ENCODE measurements at regions of chr5 and their contacts with region 1.

Region 1: GRCh38 chr5:77015938-77016569 is 14.2 kb upstream of the AGGF1 start:
- DNase-seq: peak in 1 of 2 donors; percentile 6
- H3K4me3 ChIP-seq: no peak overlapping the region
- H3K27ac ChIP-seq: no peak overlapping the region
- H3K4me1 ChIP-seq: no peaks in the 10 kb centered on the region
- H3K27me3 ChIP-seq: no peaks in the 10 kb centered on the region
- CTCF ChIP-seq: peak in 4 of 6 experiments; percentile 4 to 72 (median 42)
- POLR2A ChIP-seq: no peak

Region 2: GRCh38 chr5:76867827-76868693 is 148.0 kb before region 1 on chr5:
- intact Hi-C with region 1: loop called (anchors 5 kb)
- DNase-seq: peak; percentile 63 to 67
- H3K4me3 ChIP-seq: no peak overlapping the region
- H3K27ac ChIP-seq: no peak overlapping the region
- H3K4me1 ChIP-seq: no peaks in the 10 kb centered on the region
- H3K27me3 ChIP-seq: no peaks in the 10 kb centered on the region
- CTCF ChIP-seq: peak; percentile 43 to 89 (median 86)
- POLR2A ChIP-seq: no peak

Measured in thyroid gland (tissue), 4 donors.